GM23248 (cell line): ENCODE measurements at regions of chr1 and their contacts with region 1.

Region 1: DNA sequence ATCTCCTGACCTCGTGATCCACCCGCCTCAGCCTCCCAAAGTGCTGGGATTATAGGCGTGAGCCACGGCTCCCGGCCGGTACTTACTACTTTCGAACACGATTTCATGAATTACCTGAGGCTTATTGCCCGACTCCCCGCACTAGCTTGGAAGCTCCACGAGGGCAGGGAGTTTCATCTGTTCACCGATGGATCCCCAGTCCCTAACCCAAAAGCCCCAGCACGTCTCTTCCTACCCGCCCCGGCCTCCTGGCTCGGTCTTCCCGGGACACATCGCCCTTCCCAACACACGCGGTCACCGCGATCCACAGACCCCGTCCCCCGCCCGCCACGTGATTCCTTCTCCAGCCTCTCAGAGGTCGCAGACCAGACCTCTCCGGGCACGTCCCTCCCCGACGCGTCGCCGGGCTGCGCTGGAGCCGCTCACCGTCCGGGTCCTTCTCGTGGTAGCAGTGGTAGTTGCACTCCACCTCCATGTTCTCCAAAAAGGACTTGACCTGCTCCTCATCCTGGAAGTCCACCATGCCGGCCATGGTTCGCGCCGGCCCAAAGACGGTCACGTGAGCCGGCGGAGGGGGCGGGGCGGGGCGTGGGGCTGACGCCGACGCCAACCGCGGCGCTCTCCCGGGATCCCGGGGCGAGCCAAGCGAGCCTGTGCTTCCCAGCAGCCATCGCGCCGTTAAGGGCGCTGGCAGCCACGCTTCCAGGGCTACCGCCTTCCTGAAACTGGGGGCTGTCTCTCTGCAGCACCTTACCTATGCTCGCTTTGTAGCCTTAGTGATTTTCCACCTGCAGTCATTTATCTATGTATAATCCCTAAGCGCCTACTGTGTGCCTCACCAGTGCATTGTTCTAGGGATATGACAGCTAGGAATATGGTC is at the start of gene COA7:
- DNase-seq: peak; percentile 96
- H3K4me3 ChIP-seq: peak within 1 kb of the TSS; percentile 80
- H3K27ac ChIP-seq: peak within 1 kb of the TSS; percentile 59
- H3K4me1 ChIP-seq: no peaks in the 10 kb centered on the region
- H3K27me3 ChIP-seq: no peaks in the 10 kb centered on the region
- total RNA-seq, gene COA7: 5.1 and 6.9 TPM in 2 replicates

Region 2: GRCh38 chr1:52141513-52142219 is 556.4 kb before region 1 on chr1 and contains the start of gene ZFYVE9:
- in situ Hi-C with region 1: loop called (anchors 25 kb)
- DNase-seq: peak; percentile 92
- H3K4me3 ChIP-seq: peak within 1 kb of the TSS; percentile 82
- H3K27ac ChIP-seq: peak within 1 kb of the TSS; percentile 95
- H3K4me1 ChIP-seq: peaks cover 31% of the 10 kb centered on the region
- H3K27me3 ChIP-seq: no peaks in the 10 kb centered on the region
- total RNA-seq, gene ZFYVE9: 26.9 and 28.1 TPM in 2 replicates

Region 3: GRCh38 chr1:52225174-52225573 is 472.9 kb before region 1 on chr1:
- in situ Hi-C with region 1: no loop called
- DNase-seq: peak; percentile 27
- H3K4me3 ChIP-seq: no peak overlapping the region
- H3K27ac ChIP-seq: no peak overlapping the region
- H3K4me1 ChIP-seq: no peaks in the 10 kb centered on the region
- H3K27me3 ChIP-seq: no peaks in the 10 kb centered on the region